ENCODE measurements at regions of chr18 and their contacts with region 1.

Region 1: GRCh38 chr18:23918401-23919032 is 96.0 kb upstream of the TTC39C start:
- DNase-seq: peak; percentile 81
- H3K4me3 ChIP-seq: no peak overlapping the region
- H3K27ac ChIP-seq: no peak overlapping the region
- H3K4me1 ChIP-seq: no peaks in the 10 kb centered on the region
- H3K27me3 ChIP-seq: no peaks in the 10 kb centered on the region
- CTCF ChIP-seq: peak; percentile 32 to 80 (median 74)
- EP300 ChIP-seq: no peak
- POLR2A ChIP-seq: no peak

Region 2: DNA sequence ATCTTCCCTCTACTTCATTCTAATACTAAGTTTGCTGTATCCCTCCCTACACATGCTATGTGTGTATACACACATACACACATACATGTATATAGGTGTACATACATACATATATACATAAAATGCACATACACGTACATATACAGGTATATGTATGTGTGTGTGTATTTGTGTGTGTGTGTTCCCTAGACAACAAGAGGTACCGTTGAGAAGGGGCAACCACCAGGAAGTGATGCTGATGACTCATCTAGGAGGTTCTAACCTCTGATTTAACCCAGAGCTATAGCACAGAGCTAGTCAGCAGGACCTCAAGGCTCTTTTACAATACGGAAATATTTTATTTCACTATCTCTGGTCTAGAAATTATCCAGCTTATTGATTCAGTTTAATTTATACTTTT is 90.1 kb before region 1 on chr18:
- intact Hi-C with region 1: loop called (anchors 5 kb)
- DNase-seq: no peak
- H3K4me3 ChIP-seq: no peak overlapping the region
- H3K27ac ChIP-seq: no peak overlapping the region
- H3K4me1 ChIP-seq: peaks cover 0 to 26% (median 24%) of the 10 kb centered on the region in 4 donors
- H3K27me3 ChIP-seq: no peaks in the 10 kb centered on the region
- CTCF ChIP-seq: no peak
- EP300 ChIP-seq: no peak
- POLR2A ChIP-seq: no peak

Region 3: GRCh38 chr18:24094561-24094960 is 176.0 kb after region 1 on chr18:
- intact Hi-C with region 1: no loop called
- DNase-seq: no peak
- H3K4me3 ChIP-seq: no peak overlapping the region
- H3K27ac ChIP-seq: no peak overlapping the region
- H3K4me1 ChIP-seq: peaks cover 0 to under 1% (median 0%) of the 10 kb centered on the region in 4 donors
- H3K27me3 ChIP-seq: no peaks in the 10 kb centered on the region
- CTCF ChIP-seq: no peak
- EP300 ChIP-seq: no peak
- POLR2A ChIP-seq: no peak